ENCODE measurements at regions of chr2 and their contacts with region 1.

Region 1: DNA sequence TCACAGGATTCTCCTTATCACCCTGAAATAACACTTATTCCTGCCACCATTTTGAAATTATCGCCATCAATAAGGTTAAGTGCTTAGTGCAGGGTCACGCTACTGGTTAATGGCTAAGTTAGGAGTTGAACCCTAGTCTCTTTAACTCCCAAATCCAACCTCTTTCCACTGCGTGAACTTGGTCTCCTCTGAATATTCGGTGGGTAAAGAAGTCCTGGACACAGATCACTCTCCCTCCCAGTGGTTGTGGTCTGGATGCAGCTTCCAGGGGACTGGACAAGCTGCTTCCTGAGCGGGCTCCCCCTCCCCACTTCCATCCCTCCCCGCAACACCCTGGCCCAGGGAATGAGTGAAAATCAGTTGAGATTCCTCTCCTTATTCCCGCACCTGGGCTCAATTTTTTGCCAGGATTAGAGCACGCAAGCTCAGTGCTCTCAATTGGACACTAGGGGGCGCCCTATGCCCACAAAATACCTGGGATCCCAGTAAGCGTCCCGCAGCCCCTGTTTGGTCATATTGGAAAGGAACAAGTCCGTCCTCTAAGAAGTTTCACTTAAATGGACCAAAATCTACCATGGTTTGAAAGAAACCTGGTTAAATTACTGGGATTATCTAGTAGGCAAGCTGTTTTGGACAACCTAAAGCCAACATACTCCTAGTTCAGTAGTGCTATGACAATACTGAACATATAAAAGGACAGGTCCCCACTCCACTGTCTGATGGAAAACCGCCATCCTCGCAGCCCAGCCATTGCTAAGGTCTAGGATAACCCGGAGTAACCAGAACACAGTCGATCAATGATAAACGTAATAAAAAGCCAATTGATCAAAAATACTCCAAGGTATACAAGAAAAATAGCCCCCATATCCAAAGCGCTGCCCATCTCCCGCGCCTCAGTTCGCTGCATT is 40.4 kb downstream of the DHRS9 start:
- DNase-seq: peak; percentile 59 to 72 (median 69)
- H3K4me3 ChIP-seq: no peak overlapping the region
- H3K4me3 Mint-ChIP-seq: peak overlapping the region in 4 of 8 donors; percentile 45 to 55 (median 48)
- H3K27ac ChIP-seq: no peak overlapping the region
- H3K27ac Mint-ChIP-seq: peak overlapping the region in 3 of 7 donors; percentile 1 to 64 (median 16)
- H3K4me1 ChIP-seq: peaks cover 54% of the 10 kb centered on the region
- H3K4me1 Mint-ChIP-seq: peaks cover 41 to 52% (median 47%) of the 10 kb centered on the region in 4 donors
- H3K27me3 ChIP-seq: no peaks in the 10 kb centered on the region
- H3K27me3 Mint-ChIP-seq: peaks cover 0 to 2% of the 10 kb centered on the region in 2 donors

Region 2: DNA sequence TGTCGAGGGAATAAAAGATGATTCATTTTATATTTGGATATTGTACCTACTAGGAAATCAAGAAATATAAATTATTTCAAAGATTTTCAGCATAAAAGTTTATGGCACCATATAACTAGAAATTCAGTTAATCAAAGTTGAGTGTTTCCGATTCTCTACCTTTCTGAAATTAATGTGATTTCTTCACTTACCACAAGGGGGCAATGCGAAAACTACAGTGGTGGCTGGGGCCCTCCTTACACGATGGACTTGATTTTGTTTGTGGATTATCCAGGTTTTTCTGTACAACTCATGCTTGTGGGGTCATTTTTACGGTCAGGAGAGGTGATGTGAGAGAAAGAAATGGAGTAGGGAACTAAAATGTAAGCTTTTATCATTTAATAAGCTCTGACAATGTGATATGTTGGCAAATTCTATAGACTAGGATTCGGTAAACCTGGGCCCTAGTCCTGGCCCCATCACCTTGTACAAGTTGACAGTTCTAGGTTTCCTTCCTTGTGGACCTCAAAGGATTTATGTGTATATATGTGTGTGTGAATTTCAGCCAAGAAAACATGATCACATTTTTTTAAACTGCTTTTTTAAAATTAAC is 161.0 kb before region 1 on chr2:
- CTCF ChIA-PET with region 1: interaction called, 10 read pairs
- POLR2A ChIA-PET with region 1: no interaction called
- intact Hi-C with region 1: no loop called
- DNase-seq: peak in 2 of 5 donors; percentile 14 to 19
- H3K4me3 ChIP-seq: no peak overlapping the region
- H3K4me3 Mint-ChIP-seq: no peak overlapping the region
- H3K27ac ChIP-seq: no peak overlapping the region
- H3K27ac Mint-ChIP-seq: no peak overlapping the region
- H3K4me1 ChIP-seq: no peaks in the 10 kb centered on the region
- H3K4me1 Mint-ChIP-seq: no peaks in the 10 kb centered on the region
- H3K27me3 ChIP-seq: no peaks in the 10 kb centered on the region
- H3K27me3 Mint-ChIP-seq: peaks cover 0 to 3% of the 10 kb centered on the region in 2 donors

Region 3: GRCh38 chr2:168961450-168962229 is 148.1 kb before region 1 on chr2:
- CTCF ChIA-PET with region 1: interaction called, 75 read pairs
- POLR2A ChIA-PET with region 1: interaction called, 9 read pairs
- intact Hi-C with region 1: loop called (anchors 1 kb)
- DNase-seq: peak; percentile 32 to 67 (median 57)
- H3K4me3 ChIP-seq: no peak overlapping the region
- H3K4me3 Mint-ChIP-seq: no peak overlapping the region
- H3K27ac ChIP-seq: no peak overlapping the region
- H3K27ac Mint-ChIP-seq: peak overlapping the region in 1 of 7 donors; percentile 43
- H3K4me1 ChIP-seq: peaks cover 29% of the 10 kb centered on the region
- H3K4me1 Mint-ChIP-seq: peaks cover 28 to 34% (median 31%) of the 10 kb centered on the region in 4 donors
- H3K27me3 ChIP-seq: no peaks in the 10 kb centered on the region
- H3K27me3 Mint-ChIP-seq: peaks cover 2 to 6% of the 10 kb centered on the region in 2 donors

Region 4: DNA sequence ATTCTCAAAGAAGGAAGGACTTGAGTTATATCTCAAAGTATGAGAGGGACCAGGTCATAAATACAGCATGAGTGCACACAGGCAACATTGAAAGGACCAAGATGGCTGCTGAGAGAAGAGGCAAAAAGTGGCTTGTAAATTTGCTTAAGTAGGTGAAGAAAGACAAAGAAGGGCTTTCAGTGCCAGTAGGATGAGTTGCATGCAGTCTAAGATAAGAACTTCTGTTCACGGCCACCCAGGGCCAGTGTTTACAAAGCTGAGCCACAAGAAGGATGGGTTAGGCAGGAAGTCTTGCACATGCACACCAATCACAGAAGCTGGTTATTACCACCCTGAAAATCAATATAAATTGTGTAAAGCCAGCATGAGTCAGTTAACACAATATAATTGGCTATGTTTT is 75.5 kb before region 1 on chr2:
- CTCF ChIA-PET with region 1: interaction called, 19 read pairs
- POLR2A ChIA-PET with region 1: interaction called, 5 read pairs
- intact Hi-C with region 1: no loop called
- DNase-seq: peak in 3 of 5 donors; percentile 0 to 20 (median 7)
- H3K4me3 ChIP-seq: no peak overlapping the region
- H3K4me3 Mint-ChIP-seq: no peak overlapping the region
- H3K27ac ChIP-seq: no peak overlapping the region
- H3K27ac Mint-ChIP-seq: peak overlapping the region in 1 of 7 donors; percentile 69
- H3K4me1 ChIP-seq: no peaks in the 10 kb centered on the region
- H3K4me1 Mint-ChIP-seq: peaks cover 7 to 18% (median 11%) of the 10 kb centered on the region in 4 donors
- H3K27me3 ChIP-seq: no peaks in the 10 kb centered on the region
- H3K27me3 Mint-ChIP-seq: no peaks in the 10 kb centered on the region

Region 5: DNA sequence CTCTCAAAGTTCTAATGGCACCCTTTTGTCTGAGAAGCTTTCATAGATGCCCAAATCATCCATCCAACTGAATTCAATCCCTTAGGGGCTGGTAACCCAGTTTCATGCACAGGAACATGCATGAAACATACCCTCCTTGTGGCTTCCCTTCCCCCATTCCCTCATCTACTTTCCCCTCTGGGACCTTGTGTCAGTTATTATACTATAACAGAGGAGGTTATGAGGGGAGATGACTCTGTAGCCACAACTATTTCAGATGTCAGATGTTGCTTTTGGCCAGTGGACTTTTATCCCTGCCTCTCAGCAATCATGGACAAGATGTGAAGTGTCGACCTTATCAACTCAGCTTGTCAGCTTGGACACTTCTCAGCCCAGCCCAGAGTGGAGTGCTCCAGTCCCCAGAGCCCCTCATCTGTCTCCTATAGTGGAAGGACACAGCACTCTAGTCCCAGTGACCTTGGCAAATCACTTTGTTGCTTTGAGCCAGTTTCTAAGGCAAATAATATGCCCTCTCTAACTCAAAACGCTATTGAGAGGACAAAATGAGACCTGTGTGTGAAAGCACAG is 32.0 kb before region 1 on chr2:
- CTCF ChIA-PET with region 1: no interaction called
- POLR2A ChIA-PET with region 1: no interaction called
- intact Hi-C with region 1: no loop called
- DNase-seq: no peak
- H3K4me3 ChIP-seq: no peak overlapping the region
- H3K4me3 Mint-ChIP-seq: no peak overlapping the region
- H3K27ac ChIP-seq: no peak overlapping the region
- H3K27ac Mint-ChIP-seq: no peak overlapping the region
- H3K4me1 ChIP-seq: no peaks in the 10 kb centered on the region
- H3K4me1 Mint-ChIP-seq: peaks cover 0 to 4% (median under 1%) of the 10 kb centered on the region in 4 donors
- H3K27me3 ChIP-seq: no peaks in the 10 kb centered on the region
- H3K27me3 Mint-ChIP-seq: no peaks in the 10 kb centered on the region

Region 6: DNA sequence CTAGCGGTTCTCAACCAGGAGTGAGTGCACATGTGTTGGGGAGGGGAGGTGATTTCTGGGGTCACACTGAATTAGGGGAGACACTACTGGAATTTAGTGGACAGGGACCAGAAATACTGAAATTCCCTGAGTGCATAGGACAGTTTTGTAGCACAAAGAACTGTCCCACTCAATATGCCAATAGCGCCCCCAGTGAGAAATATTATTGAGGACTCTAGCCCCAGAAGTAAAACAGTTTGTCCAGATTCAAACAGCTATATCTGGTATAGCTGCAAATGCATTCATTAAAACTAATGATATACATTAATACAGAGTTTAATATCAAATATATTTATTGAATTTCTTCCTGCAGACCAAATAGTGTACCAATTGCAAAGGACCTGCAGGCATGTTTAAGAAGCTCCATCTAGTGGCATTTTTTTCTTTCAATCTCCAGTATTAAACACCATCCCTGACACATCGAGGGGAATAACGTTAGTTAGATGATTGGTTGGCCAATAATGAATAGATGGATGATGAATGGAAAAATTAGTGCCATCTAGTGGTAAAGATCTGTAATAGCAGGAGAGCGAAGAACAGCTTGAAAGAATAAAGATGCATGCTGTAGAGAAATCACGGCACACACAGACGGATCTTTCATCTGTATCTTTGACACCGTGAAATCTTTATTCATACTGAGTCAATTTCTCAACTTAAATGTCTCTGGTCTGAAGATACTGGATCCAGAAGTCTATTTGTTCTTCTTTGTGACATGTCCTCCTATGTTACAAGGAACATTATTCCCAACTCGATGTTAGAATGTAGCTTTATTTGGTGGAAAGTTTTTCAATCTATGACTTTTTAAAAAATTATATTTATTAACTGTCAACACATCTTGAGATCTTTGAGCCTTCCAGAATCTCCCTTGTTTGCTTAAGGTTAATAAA is 22.1 kb after region 1 on chr2:
- CTCF ChIA-PET with region 1: interaction called, 423 read pairs
- POLR2A ChIA-PET with region 1: interaction called, 11 read pairs
- intact Hi-C with region 1: loop called (anchors 1 kb)
- DNase-seq: peak in 4 of 5 donors; percentile 52 to 58 (median 54)
- H3K4me3 ChIP-seq: no peak overlapping the region
- H3K4me3 Mint-ChIP-seq: no peak overlapping the region
- H3K27ac ChIP-seq: no peak overlapping the region
- H3K27ac Mint-ChIP-seq: peak overlapping the region in 3 of 7 donors; percentile 1 to 32 (median 18)
- H3K4me1 ChIP-seq: no peaks in the 10 kb centered on the region
- H3K4me1 Mint-ChIP-seq: peaks cover 0 to 6% (median 3%) of the 10 kb centered on the region in 4 donors
- H3K27me3 ChIP-seq: no peaks in the 10 kb centered on the region
- H3K27me3 Mint-ChIP-seq: no peaks in the 10 kb centered on the region

Region 7: DNA sequence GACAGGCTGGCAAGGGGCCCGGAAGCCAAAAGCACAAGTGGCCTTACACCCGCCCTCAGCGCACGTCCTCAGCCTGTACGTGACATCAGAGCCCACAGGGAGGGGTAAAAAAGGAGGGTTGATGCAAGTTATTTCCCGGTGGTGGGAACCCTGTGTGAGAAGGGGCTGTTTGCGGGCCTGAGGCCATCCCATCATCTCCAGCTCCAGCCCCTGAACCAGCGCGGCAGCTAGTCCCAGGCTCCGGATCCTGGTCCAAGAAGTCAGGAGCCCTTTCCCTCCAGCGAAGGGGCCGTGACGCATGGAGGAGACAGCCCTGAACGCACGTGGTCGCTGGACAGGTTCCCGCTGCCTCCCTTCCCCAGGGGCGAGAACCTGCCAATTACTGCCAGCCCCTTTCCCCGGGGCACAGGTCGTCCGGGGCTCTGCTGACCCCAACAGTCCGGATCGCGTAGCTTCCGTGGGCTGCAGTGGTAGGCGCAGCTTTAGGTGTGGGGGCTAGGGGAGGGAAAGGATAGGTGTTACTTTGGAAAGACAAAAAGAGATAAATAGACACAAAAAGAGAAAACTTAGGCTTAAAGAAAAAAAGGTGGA is 253.9 kb after region 1 on chr2:
- CTCF ChIA-PET with region 1: no interaction called
- POLR2A ChIA-PET with region 1: no interaction called
- intact Hi-C with region 1: loop called (anchors 5 kb)
- DNase-seq: peak in 3 of 5 donors; percentile 44 to 75 (median 51)
- H3K4me3 ChIP-seq: peak overlapping the region; percentile 78 to 92
- H3K4me3 Mint-ChIP-seq: peak overlapping the region; percentile 89 to 97 (median 95)
- H3K27ac ChIP-seq: no peak overlapping the region
- H3K27ac Mint-ChIP-seq: peak overlapping the region in 6 of 7 donors; percentile 32 to 89 (median 64)
- H3K4me1 ChIP-seq: peaks cover 16% of the 10 kb centered on the region
- H3K4me1 Mint-ChIP-seq: peaks cover 16 to 41% (median 21%) of the 10 kb centered on the region in 4 donors
- H3K27me3 ChIP-seq: peaks cover 6% of the 10 kb centered on the region
- H3K27me3 Mint-ChIP-seq: peaks cover 22 to 23% of the 10 kb centered on the region in 2 donors